Activated CD8-positive, alpha-beta T cell treated with anti-CD3 and anti-CD28 coated beads for 36 hours (primary cell): ENCODE measurements at regions of chr17 and their contacts with region 1.

Region 1: GRCh38 chr17:66567234-66568170 is 265.1 kb downstream of the PRKCA start:
- DNase-seq: peak; percentile 86
- ATAC-seq: peak; percentile 80
- H3K4me3 Mint-ChIP-seq: no peak overlapping the region
- H3K27ac Mint-ChIP-seq: peak overlapping the region; percentile 38
- H3K4me1 Mint-ChIP-seq: peaks cover 34% of the 10 kb centered on the region
- H3K27me3 Mint-ChIP-seq: no peaks in the 10 kb centered on the region
- CTCF ChIP-seq: peak; percentile 94

Region 2: GRCh38 chr17:66255112-66255511 is 312.4 kb before region 1 on chr17:
- CTCF ChIA-PET with region 1: interaction called, 22 read pairs
- POLR2A ChIA-PET with region 1: no interaction called
- intact Hi-C with region 1: loop called (anchors 10 kb)
- DNase-seq: peak; percentile 54
- ATAC-seq: peak; percentile 96
- H3K4me3 Mint-ChIP-seq: peak overlapping the region; percentile 32
- H3K27ac Mint-ChIP-seq: peak overlapping the region; percentile 40
- H3K4me1 Mint-ChIP-seq: peaks cover 14% of the 10 kb centered on the region
- H3K27me3 Mint-ChIP-seq: no peaks in the 10 kb centered on the region
- CTCF ChIP-seq: peak; percentile 82

Region 3: DNA sequence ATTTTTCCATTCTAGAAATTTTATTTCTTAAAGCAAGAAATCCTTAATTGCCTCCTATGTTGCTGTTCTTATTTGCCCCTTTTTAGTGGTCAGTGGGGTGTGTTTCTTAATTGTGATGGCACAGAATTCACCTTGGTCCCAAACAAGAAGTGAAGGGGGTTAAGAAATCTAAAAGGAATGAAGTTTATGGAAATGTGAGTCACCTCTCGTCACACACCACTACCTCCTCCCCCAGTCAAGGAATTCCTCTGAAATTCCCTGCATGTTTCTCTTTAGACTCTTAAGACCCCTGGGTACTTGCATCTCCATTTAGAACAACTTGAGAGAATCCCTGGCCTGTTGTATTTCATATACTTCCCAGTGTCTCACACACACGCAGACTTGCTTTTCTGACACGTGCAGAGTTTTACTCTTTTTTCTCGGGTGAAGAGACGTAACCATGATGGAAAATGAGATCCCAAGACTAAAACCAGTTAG is 17.7 kb before region 1 on chr17:
- CTCF ChIA-PET with region 1: interaction called, 19 read pairs
- POLR2A ChIA-PET with region 1: no interaction called
- intact Hi-C with region 1: no loop called
- DNase-seq: no peak
- ATAC-seq: no peak
- H3K4me3 Mint-ChIP-seq: no peak overlapping the region
- H3K27ac Mint-ChIP-seq: no peak overlapping the region
- H3K4me1 Mint-ChIP-seq: peaks cover 43% of the 10 kb centered on the region
- H3K27me3 Mint-ChIP-seq: no peaks in the 10 kb centered on the region
- CTCF ChIP-seq: no peak

Region 4: DNA sequence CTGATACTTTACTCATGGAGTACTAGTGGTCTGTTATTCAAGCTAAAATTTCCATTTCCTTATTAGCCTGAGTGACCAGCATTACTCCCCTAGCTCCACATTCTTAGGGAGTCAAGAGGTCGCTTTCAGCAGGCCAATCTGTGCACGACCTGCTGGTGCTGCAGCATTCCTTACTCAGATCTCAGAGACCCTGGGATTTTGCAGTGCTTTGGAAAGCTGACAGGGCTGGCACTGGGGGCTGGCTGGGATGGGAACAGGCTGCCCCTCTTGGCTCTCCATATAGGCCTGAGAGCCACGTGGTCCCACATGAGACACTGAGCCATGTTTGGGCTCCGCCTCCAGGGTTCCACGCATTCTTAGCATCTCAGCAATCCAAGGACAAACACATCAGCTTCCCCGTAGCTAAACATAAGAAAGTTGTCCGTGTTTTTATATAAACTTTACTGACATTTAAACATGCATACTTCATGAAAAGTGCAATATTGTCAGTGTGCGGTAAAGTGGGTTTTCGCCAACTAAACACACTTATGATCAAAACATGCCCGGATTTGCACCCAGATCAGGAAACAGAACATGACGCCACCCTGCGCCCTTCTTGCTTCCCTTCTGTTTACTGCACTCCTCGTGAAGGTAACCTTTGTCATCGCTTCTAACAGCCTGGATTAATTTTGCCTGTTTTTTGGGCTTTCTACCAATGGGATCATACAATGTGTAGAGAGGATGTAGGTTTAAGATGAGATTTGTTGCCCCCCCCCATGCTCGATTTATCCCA is 12.9 kb after region 1 on chr17:
- CTCF ChIA-PET with region 1: interaction called, 10 read pairs
- POLR2A ChIA-PET with region 1: no interaction called
- intact Hi-C with region 1: no loop called
- DNase-seq: no peak
- ATAC-seq: no peak
- H3K4me3 Mint-ChIP-seq: no peak overlapping the region
- H3K27ac Mint-ChIP-seq: no peak overlapping the region
- H3K4me1 Mint-ChIP-seq: peaks cover 20% of the 10 kb centered on the region
- H3K27me3 Mint-ChIP-seq: no peaks in the 10 kb centered on the region
- CTCF ChIP-seq: no peak

Region 5: GRCh38 chr17:66713533-66714042 is 146.1 kb after region 1 on chr17:
- CTCF ChIA-PET with region 1: no interaction called
- POLR2A ChIA-PET with region 1: no interaction called
- intact Hi-C with region 1: no loop called
- DNase-seq: peak; percentile 71
- ATAC-seq: peak; percentile 69
- H3K4me3 Mint-ChIP-seq: no peak overlapping the region
- H3K27ac Mint-ChIP-seq: peak overlapping the region; percentile 83
- H3K4me1 Mint-ChIP-seq: peaks cover 52% of the 10 kb centered on the region
- H3K27me3 Mint-ChIP-seq: no peaks in the 10 kb centered on the region
- CTCF ChIP-seq: no peak